Activated naive CD4-positive, alpha-beta T cell treated with anti-CD3 and anti-CD28 coated beads for 36 hours (primary cell): ENCODE measurements at regions of chr6 and their contacts with region 1.

Region 1: GRCh38 chr6:27503436-27504030 is 30.6 kb upstream of the ZNF184 start:
- DNase-seq: peak; percentile 88
- H3K4me3 Mint-ChIP-seq: peak overlapping the region; percentile 90
- H3K27ac Mint-ChIP-seq: peak overlapping the region; percentile 86
- H3K4me1 Mint-ChIP-seq: peaks cover 24% of the 10 kb centered on the region
- H3K27me3 Mint-ChIP-seq: peaks cover 1% of the 10 kb centered on the region

Region 2: DNA sequence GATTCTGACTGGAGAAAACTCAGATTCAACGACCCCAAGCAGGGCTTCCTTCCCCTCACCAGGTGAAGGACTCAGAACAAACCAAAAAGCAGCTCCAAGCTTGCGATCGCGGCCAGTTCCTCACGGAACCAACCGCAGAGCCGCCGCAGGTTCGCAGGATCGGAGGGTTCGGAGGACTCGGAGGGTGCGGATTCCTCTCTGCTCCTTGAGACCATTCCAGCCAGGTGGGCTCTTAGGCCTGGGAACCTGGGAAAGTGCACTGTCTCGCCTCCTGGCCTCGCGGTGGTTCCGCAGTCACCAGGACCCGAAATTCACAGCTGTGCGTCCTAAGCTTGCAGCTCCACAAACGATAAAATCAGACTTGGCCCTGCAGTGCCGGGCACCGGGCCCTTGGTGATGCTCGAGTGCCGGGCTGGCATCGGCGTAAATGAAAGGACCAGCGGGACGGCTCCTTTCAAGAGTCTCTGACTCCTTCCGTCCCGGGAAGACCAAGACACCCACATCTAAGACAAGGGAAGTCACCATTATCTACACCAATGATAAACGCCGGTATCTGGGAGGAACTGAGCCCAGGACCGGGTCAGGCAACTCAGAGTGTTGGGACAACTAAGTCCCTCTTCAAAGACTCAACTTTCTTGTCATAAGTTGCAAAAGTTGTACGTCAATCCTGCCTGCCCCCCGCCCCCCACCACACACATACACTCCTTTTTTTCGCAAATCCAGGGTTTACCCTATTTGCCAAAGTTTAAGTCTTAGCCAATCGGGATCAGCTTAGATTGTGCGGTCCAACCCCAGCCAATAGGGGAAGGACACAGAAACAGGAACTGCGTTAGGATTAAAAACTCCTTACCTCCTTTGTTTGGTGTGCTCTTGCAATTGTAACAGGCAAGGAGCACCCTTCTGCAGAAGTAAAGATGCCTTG is 325.8 kb before region 1 on chr6:
- CTCF ChIA-PET with region 1: no interaction called
- intact Hi-C with region 1: loop called (anchors 2 kb)
- DNase-seq: peak; percentile 83
- H3K4me3 Mint-ChIP-seq: peak overlapping the region; percentile 92
- H3K27ac Mint-ChIP-seq: peak overlapping the region; percentile 87
- H3K4me1 Mint-ChIP-seq: peaks cover 4% of the 10 kb centered on the region
- H3K27me3 Mint-ChIP-seq: peaks cover 6% of the 10 kb centered on the region

Region 3: DNA sequence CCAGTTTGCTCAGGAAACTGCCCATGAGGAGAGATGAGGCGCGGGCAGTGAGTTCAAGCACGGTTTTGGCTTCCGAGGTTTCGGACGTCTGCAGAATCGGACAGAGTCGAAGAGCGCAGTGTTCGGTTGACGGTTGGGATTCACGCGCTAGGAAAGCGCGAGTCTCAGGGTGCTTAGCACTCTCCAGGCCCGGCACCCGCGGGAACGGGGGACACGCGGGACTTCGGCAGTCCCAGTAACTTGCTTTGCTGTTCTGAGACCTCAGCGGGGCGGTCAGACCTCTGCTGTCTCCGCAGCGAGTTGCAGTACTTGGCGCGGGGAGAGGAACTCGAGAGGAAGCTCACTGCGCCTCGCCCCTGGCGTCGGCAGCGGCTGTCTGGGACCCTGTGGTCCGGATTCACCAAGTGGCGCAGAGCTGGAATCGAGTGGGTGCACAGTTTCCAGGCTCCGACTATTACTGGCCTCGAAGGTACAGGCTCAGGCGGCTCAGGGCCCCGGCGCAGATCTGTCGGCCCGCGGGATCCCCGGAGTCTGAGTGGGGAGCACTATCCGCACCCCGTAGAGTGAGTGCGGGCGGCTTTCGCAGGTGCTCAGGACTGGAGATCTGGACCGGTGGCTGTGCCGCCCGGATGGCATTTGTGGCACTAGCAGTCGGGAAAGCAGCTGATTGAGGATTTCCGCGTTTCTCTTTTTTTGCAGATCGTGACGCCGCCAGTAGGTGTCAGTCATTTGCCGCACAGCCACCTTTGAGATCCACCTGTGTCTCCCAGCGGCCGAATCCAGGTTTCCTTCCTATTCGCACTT is 191.2 kb before region 1 on chr6 and contains the start of gene POM121L2:
- CTCF ChIA-PET with region 1: interaction called, 3 read pairs
- intact Hi-C with region 1: loop called (anchors 5 kb)
- DNase-seq: peak; percentile 79
- H3K4me3 Mint-ChIP-seq: peak within 1 kb of the TSS; percentile 72
- H3K27ac Mint-ChIP-seq: no peak within 1 kb of the TSS
- H3K4me1 Mint-ChIP-seq: peaks cover 10% of the 10 kb centered on the region
- H3K27me3 Mint-ChIP-seq: peaks cover 62% of the 10 kb centered on the region
- total RNA-seq, gene POM121L2: not detected

Region 4: GRCh38 chr6:27479319-27480182 is 24.0 kb before region 1 on chr6:
- CTCF ChIA-PET with region 1: no interaction called
- intact Hi-C with region 1: loop called (anchors 1 kb)
- DNase-seq: peak; percentile 90
- H3K4me3 Mint-ChIP-seq: no peak overlapping the region
- H3K27ac Mint-ChIP-seq: no peak overlapping the region
- H3K4me1 Mint-ChIP-seq: peaks cover 6% of the 10 kb centered on the region
- H3K27me3 Mint-ChIP-seq: no peaks in the 10 kb centered on the region

Region 5: DNA sequence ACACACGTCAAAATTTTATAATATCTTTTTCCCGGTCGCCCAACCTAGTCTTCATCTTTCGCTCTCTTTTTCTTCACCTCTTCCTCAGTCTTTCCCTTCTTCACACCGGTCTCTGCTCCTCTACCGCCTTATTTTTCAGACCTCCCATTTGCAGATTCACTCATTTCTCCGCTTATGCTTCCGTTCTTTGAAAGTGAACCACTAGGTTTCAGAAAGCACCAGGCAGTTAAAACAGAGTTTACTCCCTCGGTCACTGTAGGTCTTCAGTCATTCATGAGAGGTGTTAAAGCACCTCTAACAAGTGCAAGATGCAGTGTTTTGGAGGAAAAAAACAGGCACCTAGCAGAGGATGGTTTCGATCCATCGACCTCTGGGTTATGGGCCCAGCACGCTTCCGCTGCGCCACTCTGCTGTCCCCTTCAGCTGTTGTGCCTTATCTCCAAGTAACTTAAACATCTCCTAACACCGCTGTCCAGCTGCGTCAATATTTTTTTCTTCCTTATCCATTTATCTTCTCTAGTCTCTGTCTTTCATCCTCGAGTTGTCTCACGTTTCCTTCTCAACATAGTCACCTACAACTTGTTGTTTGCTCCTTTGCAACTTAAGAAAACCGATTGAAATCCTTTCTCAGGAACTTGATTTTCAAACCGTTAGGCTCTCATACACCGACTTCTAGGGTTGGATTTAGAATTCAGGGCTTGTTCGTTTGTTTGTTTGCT is 89.1 kb after region 1 on chr6:
- CTCF ChIA-PET with region 1: no interaction called
- intact Hi-C with region 1: loop called (anchors 5 kb)
- DNase-seq: peak; percentile 71
- H3K4me3 Mint-ChIP-seq: no peak overlapping the region
- H3K27ac Mint-ChIP-seq: no peak overlapping the region
- H3K4me1 Mint-ChIP-seq: no peaks in the 10 kb centered on the region
- H3K27me3 Mint-ChIP-seq: peaks cover 26% of the 10 kb centered on the region